PC-9 (cell line): ENCODE measurements at regions of chr11 and their contacts with region 1.

Region 1: DNA sequence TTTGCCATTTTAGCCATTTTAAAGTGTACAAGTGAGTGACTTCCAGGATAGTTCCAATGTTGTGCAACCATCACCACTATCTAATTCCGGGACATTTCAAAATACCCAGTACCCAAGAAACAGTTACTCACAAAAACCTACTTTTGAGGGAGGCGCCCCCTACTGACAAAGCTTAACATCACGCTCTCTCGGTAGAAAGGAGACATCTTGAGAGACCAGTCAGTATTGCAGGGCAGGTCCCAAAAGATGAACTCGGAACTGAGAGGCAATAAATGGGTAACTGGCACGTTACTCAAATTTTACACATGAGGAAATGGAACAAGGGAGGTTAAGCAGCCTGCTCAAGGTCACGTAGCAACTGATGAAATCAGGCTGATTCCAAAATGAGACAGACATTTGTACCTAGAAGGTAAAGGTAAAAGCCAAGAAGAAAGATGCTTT is 50.0 kb upstream of the POU2AF1 start:
- DNase-seq: peak; percentile 29 to 55
- H3K4me3 ChIP-seq: no peak overlapping the region
- H3K27ac ChIP-seq: no peak overlapping the region
- H3K4me1 ChIP-seq: no peaks in the 10 kb centered on the region
- H3K27me3 ChIP-seq: no peaks in the 10 kb centered on the region
- CTCF ChIP-seq: peak; percentile 87

Region 2: GRCh38 chr11:111230122-111230465 is 199.0 kb before region 1 on chr11:
- CTCF ChIA-PET with region 1: no interaction called
- POLR2A ChIA-PET with region 1: no interaction called
- intact Hi-C with region 1: loop called (anchors 5 kb)
- DNase-seq: no peak
- H3K4me3 ChIP-seq: no peak overlapping the region; the same call in 1 of the 2 replicates
- H3K27ac ChIP-seq: no peak overlapping the region
- H3K4me1 ChIP-seq: peaks cover 5% of the 10 kb centered on the region
- H3K27me3 ChIP-seq: no peaks in the 10 kb centered on the region
- CTCF ChIP-seq: no peak

Region 3: GRCh38 chr11:111454561-111455192 is 25.6 kb after region 1 on chr11:
- CTCF ChIA-PET with region 1: no interaction called
- POLR2A ChIA-PET with region 1: no interaction called
- intact Hi-C with region 1: no loop called
- DNase-seq: peak in 1 of 2 experiments; percentile 48
- H3K4me3 ChIP-seq: no peak overlapping the region
- H3K27ac ChIP-seq: no peak overlapping the region
- H3K4me1 ChIP-seq: no peaks in the 10 kb centered on the region
- H3K27me3 ChIP-seq: no peaks in the 10 kb centered on the region
- CTCF ChIP-seq: peak; percentile 58

Region 4: DNA sequence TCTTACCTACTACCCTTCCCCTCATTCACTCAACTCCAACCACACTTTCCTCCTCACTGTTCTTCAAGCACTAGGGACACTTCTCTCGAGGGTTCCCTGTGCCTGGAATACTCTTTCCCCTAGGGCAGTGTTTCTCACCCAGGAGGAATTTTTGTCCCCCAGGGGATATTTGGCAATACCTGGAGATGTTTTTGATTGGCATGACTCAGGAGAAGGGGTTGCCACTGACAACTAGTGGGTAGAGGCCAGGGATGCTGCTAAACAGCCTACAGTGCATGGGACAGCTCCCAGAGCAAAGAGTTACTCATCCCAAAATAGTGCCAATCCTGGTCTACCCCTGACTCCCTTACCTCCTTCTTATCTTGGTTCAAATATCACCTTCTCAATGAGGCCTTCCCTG is 43.1 kb after region 1 on chr11:
- CTCF ChIA-PET with region 1: interaction called, 12 read pairs
- POLR2A ChIA-PET with region 1: no interaction called
- intact Hi-C with region 1: no loop called
- DNase-seq: peak in 1 of 2 experiments; percentile 58
- H3K4me3 ChIP-seq: no peak overlapping the region
- H3K27ac ChIP-seq: no peak overlapping the region
- H3K4me1 ChIP-seq: peaks cover 7% of the 10 kb centered on the region; the same call in 1 of the 2 replicates
- H3K27me3 ChIP-seq: no peaks in the 10 kb centered on the region
- CTCF ChIP-seq: no peak

Region 5: GRCh38 chr11:111540114-111540936 is 111.2 kb after region 1 on chr11 and contains the start of gene LAYN:
- CTCF ChIA-PET with region 1: no interaction called
- POLR2A ChIA-PET with region 1: no interaction called
- intact Hi-C with region 1: no loop called
- DNase-seq: peak in 1 of 2 experiments; percentile 68
- H3K4me3 ChIP-seq: peak within 1 kb of the TSS; percentile 57
- H3K27ac ChIP-seq: no peak within 1 kb of the TSS
- H3K4me1 ChIP-seq: peaks cover 22% of the 10 kb centered on the region
- H3K27me3 ChIP-seq: no peaks in the 10 kb centered on the region
- CTCF ChIP-seq: no peak
- total RNA-seq, gene LAYN: 19.9 and 22.2 TPM in 2 replicates

Region 6: GRCh38 chr11:111992206-111992855 is 563.2 kb after region 1 on chr11:
- CTCF ChIA-PET with region 1: no interaction called
- POLR2A ChIA-PET with region 1: no interaction called
- intact Hi-C with region 1: no loop called
- DNase-seq: no peak
- H3K4me3 ChIP-seq: no peak overlapping the region
- H3K27ac ChIP-seq: no peak overlapping the region
- H3K4me1 ChIP-seq: 0 out of 2 replicates have a peak, but pooled peaks cover 8% of the 10 kb centered on the region
- H3K27me3 ChIP-seq: no peaks in the 10 kb centered on the region
- CTCF ChIP-seq: no peak